ENCODE measurements at regions of chr21 and their contacts with region 1.

Region 1: GRCh38 chr21:42164064-42164789 is 54.7 kb upstream of the ABCG1 start:
- DNase-seq: peak; percentile 44
- ATAC-seq: peak; percentile 79
- H3K4me3 ChIP-seq: no peak overlapping the region
- H3K27ac ChIP-seq: no peak overlapping the region
- H3K4me1 ChIP-seq: 0 out of 2 replicates have a peak, but pooled peaks cover 3% of the 10 kb centered on the region
- H3K27me3 ChIP-seq: no peaks in the 10 kb centered on the region
- CTCF ChIP-seq: peak; percentile 75

Region 2: DNA sequence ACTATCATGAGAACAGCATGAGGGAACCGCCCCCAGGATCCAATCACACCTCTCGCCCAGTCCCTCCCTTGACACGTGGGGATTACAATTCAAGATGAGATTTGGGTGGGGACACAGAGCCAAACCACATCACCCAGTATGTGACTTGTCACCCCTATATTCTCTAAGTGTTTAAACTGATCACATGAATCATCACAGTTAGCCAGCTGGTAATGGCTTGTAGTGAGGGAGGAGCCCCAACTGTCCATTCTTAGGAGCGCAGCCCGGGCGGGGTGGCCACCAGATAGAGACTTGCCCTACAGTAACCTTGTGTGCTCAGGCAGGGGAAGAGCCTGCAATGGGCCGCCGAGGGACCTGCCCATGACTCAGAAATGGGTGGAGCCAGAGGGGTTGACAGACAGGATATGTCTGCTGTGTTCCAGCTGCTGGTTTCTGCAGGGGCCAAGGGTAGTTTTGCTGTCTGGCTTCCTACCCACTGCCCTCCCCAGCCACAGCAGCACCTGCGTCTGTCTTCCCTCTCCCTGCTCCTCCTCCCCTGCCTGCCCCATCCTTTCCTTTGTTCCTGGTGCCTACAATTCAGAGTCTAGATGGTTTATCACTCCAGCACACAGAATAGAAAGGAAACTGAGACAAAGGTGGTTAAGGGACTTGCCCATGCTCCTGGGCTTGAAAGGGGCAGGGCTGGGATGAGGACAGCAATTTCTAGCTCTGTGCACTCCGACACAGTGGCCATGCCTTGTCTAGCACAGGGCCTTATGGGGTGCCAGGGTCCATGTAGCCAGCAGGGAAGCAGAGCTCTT is 63.9 kb after region 1 on chr21:
- CTCF ChIA-PET with region 1: no interaction called
- POLR2A ChIA-PET with region 1: no interaction called
- intact Hi-C with region 1: loop called (anchors 2 kb)
- DNase-seq: peak; percentile 79
- ATAC-seq: peak; percentile 99
- H3K4me3 ChIP-seq: no peak overlapping the region
- H3K27ac ChIP-seq: no peak overlapping the region
- H3K4me1 ChIP-seq: peaks cover 10% of the 10 kb centered on the region
- H3K27me3 ChIP-seq: no peaks in the 10 kb centered on the region
- CTCF ChIP-seq: no peak

Region 3: GRCh38 chr21:42289926-42290325 is 125.7 kb after region 1 on chr21:
- CTCF ChIA-PET with region 1: no interaction called
- POLR2A ChIA-PET with region 1: no interaction called
- intact Hi-C with region 1: no loop called
- DNase-seq: no peak
- ATAC-seq: no peak
- H3K4me3 ChIP-seq: no peak overlapping the region
- H3K27ac ChIP-seq: no peak overlapping the region
- H3K4me1 ChIP-seq: no peaks in the 10 kb centered on the region
- H3K27me3 ChIP-seq: no peaks in the 10 kb centered on the region
- CTCF ChIP-seq: no peak

Measured in PC-3 (cell line).